ENCODE measurements at regions of chr17 and their contacts with region 1.

Region 1: GRCh38 chr17:28710861-28711722 is 596 bp downstream of the PROCA1 start:
- DNase-seq: peak; percentile 80 to 84 (median 82)
- ATAC-seq: peak; percentile 94
- H3K4me3 ChIP-seq: peak overlapping the region in 1 of 2 donors; percentile 16
- H3K27ac ChIP-seq: peak overlapping the region; percentile 39 to 79 (median 56)
- H3K4me1 ChIP-seq: peaks cover 14% of the 10 kb centered on the region
- H3K27me3 ChIP-seq: no peaks in the 10 kb centered on the region
- CTCF ChIP-seq: no peak
- POLR2A ChIP-seq: peak; percentile 36 to 70 (median 69)

Region 2: GRCh38 chr17:28661635-28662537 is 49.2 kb before region 1 on chr17 and contains the starts of genes SDF2 and SUPT6H:
- intact Hi-C with region 1: loop called (anchors 5 kb)
- DNase-seq: peak; percentile 88 to 91 (median 90)
- ATAC-seq: peak; percentile 94
- H3K4me3 ChIP-seq: peak within 1 kb of the TSS; percentile 37 to 45
- H3K27ac ChIP-seq: peak within 1 kb of the TSS; percentile 87 to 96 (median 92)
- H3K4me1 ChIP-seq: peaks cover 33% of the 10 kb centered on the region
- H3K27me3 ChIP-seq: no peaks in the 10 kb centered on the region
- CTCF ChIP-seq: peak in 1 of 7 experiments; percentile 16
- POLR2A ChIP-seq: peak; percentile 45 to 91 (median 86)
- total RNA-seq, gene SDF2: 13.8 to 22.8 TPM
- total RNA-seq, gene SUPT6H: 26.5 to 37.2 TPM

Measured in body of pancreas (tissue), 4 donors.